IMR-90 (cell line): ENCODE measurements at regions of chr2 and their contacts with region 1.

Region 1: GRCh38 chr2:74178201-74179062 is at the start of gene MOB1A:
- DNase-seq: peak; percentile 98
- ATAC-seq: peak; percentile 99
- H3K4me3 ChIP-seq: peak within 1 kb of the TSS; percentile 95
- H3K27ac ChIP-seq: peak within 1 kb of the TSS; percentile 74
- H3K4me1 ChIP-seq: 0 out of 2 replicates have a peak, but pooled peaks cover 2% of the 10 kb centered on the region
- H3K27me3 ChIP-seq: no peaks in the 10 kb centered on the region
- CTCF ChIP-seq: no peak
- POLR2A ChIP-seq: peak; percentile 91
- RAD21 ChIP-seq: no peak
- total RNA-seq, gene MOB1A: 60.8 and 105 TPM in 2 replicates

Region 2: GRCh38 chr2:74080346-74080745 is 98.1 kb before region 1 on chr2:
- CTCF ChIA-PET with region 1: no interaction called
- POLR2A ChIA-PET with region 1: no interaction called
- dilution Hi-C with region 1: no loop called
- in situ Hi-C with region 1: no loop called
- intact Hi-C with region 1: no loop called
- DNase-seq: no peak
- ATAC-seq: peak; percentile 9; the same call in 1 of the 2 replicates
- H3K4me3 ChIP-seq: no peak overlapping the region
- H3K27ac ChIP-seq: no peak overlapping the region
- H3K4me1 ChIP-seq: peaks cover 20% of the 10 kb centered on the region
- H3K27me3 ChIP-seq: no peaks in the 10 kb centered on the region
- CTCF ChIP-seq: no peak
- POLR2A ChIP-seq: no peak
- RAD21 ChIP-seq: no peak; the same call in none of the 2 replicates

Region 3: GRCh38 chr2:74198461-74199274 is 20.2 kb after region 1 on chr2 and contains the start of gene MTHFD2:
- CTCF ChIA-PET with region 1: interaction called, 3 read pairs
- POLR2A ChIA-PET with region 1: interaction called, 8 read pairs
- dilution Hi-C with region 1: no loop called
- in situ Hi-C with region 1: no loop called
- intact Hi-C with region 1: loop called (anchors 1 kb)
- DNase-seq: peak; percentile 97
- ATAC-seq: peak; percentile 90
- H3K4me3 ChIP-seq: peak within 1 kb of the TSS; percentile 80
- H3K27ac ChIP-seq: peak within 1 kb of the TSS; percentile 91
- H3K4me1 ChIP-seq: peaks cover 5% of the 10 kb centered on the region
- H3K27me3 ChIP-seq: no peaks in the 10 kb centered on the region
- CTCF ChIP-seq: peak; percentile 77
- POLR2A ChIP-seq: peak; percentile 99
- RAD21 ChIP-seq: peak; percentile 43
- total RNA-seq, gene MTHFD2: 122 and 136 TPM in 2 replicates